Gastrocnemius medialis (tissue), 4 donors: ENCODE measurements at regions of chr10 and their contacts with region 1.

Region 1: GRCh38 chr10:58360391-58361004 is 24.7 kb upstream of the TFAM start:
- DNase-seq: peak; percentile 79 to 80
- ATAC-seq: peak; percentile 94 to 96
- H3K4me3 ChIP-seq: no peak overlapping the region
- H3K27ac ChIP-seq: peak overlapping the region; percentile 85 to 98 (median 86)
- H3K4me1 ChIP-seq: peaks cover 59 to 65% of the 10 kb centered on the region in 2 donors
- H3K27me3 ChIP-seq: no peaks in the 10 kb centered on the region
- CTCF ChIP-seq: no peak
- POLR2A ChIP-seq: peak in 1 of 2 donors; percentile 26

Region 2: DNA sequence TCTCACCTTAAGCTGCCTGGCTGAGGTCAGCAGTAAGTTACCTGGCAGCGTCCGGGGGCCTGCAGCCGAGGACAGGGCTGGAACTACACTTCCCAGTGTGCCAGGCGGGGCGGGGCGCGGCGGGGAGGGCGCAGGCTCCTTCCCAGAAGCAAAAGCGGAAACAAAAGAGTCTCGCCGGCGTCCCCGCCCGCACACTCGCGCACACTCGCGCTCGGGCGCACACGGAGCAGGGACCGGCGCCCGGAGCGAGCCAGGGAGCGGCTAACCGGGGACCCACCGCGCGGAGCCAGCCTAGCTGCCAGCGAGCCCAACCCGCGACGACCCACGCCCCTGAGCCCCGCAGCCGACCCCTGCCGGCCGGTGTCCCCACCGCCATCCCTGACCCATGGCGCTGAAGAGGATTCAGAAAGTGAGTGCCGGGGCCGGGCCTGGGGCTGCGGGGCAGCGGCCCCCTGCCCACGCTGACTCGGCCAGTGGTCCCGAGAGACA is 25.6 kb before region 1 on chr10 and contains the start of gene UBE2D1:
- in situ Hi-C with region 1: no loop called
- intact Hi-C with region 1: loop called (anchors 2 kb)
- DNase-seq: peak; percentile 90
- ATAC-seq: peak; percentile 63 to 78
- H3K4me3 ChIP-seq: peak within 1 kb of the TSS; percentile 78 to 98 (median 92)
- H3K27ac ChIP-seq: peak within 1 kb of the TSS; percentile 96 to 100 (median 98)
- H3K4me1 ChIP-seq: peaks cover 19 to 34% of the 10 kb centered on the region in 2 donors
- H3K27me3 ChIP-seq: no peaks in the 10 kb centered on the region
- CTCF ChIP-seq: peak in 4 of 5 experiments; percentile 14 to 53 (median 26)
- POLR2A ChIP-seq: peak; percentile 98
- total RNA-seq, gene UBE2D1: 62.0 to 178 (median 81.6) TPM

Region 3: DNA sequence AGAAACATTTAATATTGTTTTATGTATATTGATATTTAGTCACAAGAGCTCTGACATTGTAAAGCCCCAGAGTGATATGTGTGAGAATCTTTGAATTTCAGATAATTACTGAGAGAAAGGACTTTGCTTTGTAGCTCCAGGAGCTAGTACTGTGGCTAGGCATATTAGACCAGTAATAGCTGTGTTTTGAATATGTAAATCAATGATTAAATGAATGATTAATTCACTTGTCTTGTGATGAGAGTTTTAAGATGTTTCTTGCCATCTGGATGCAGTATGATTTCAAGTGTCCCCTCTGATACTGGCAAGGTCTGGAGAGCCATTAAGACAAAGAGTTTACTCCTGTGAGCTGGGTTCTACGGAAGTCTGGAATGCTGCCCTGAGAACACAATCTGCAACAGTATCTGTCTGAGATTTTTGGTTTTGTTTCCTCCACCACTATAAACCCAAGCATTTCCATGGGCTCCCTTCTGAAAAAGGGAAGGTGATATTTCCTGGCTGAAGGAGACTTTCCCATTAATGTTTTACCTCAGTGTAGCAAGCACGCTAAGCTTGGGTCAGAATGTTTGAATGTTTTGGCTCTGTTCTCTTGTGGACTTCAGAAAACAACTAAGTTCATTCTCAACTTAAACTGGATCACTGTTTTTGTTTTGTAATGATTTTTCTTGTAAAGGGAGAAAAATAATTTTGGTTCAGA is 90.8 kb after region 1 on chr10:
- in situ Hi-C with region 1: no loop called
- intact Hi-C with region 1: no loop called
- DNase-seq: no peak
- ATAC-seq: no peak
- H3K4me3 ChIP-seq: no peak overlapping the region
- H3K27ac ChIP-seq: no peak overlapping the region
- H3K4me1 ChIP-seq: no peaks in the 10 kb centered on the region
- H3K27me3 ChIP-seq: no peaks in the 10 kb centered on the region
- CTCF ChIP-seq: no peak
- POLR2A ChIP-seq: no peak